AG04449 (cell line): ENCODE measurements at regions of chr2 and their contacts with region 1.

Region 1: DNA sequence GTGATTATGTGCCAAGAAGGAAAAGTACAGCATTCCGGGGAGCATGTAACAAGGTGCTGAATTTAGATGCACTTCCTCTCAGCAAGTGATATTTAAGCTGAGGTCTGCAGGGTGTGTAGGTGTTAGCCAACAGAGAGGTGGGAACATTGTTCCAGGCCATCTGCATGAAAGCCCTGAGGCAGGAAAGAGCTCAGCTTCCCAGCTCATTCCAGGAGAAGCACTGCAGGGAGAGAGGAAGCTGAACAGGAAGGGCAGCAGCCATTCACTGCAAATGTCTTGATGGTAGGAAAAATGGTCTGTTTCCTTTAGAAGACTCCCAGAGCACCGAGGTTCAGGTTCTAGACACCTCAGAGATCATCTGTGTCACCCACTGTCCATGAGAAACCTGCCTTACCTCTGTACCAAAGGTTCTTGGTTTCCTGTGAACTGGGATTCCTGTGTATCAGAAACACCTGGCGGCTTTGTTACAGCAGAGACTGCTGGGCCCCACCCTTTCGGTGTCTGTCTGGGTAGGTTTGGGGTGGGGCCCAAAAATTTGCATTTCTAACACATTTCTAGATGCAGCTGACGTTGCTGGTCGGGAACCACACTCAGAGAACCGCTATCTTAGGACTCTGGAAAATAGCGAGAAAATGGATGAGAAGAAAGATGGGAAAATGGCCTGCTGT is 84.0 kb downstream of the RTN4 start:
- DNase-seq: no peak
- H3K4me3 ChIP-seq: no peak overlapping the region
- CTCF ChIP-seq: no peak

Region 2: DNA sequence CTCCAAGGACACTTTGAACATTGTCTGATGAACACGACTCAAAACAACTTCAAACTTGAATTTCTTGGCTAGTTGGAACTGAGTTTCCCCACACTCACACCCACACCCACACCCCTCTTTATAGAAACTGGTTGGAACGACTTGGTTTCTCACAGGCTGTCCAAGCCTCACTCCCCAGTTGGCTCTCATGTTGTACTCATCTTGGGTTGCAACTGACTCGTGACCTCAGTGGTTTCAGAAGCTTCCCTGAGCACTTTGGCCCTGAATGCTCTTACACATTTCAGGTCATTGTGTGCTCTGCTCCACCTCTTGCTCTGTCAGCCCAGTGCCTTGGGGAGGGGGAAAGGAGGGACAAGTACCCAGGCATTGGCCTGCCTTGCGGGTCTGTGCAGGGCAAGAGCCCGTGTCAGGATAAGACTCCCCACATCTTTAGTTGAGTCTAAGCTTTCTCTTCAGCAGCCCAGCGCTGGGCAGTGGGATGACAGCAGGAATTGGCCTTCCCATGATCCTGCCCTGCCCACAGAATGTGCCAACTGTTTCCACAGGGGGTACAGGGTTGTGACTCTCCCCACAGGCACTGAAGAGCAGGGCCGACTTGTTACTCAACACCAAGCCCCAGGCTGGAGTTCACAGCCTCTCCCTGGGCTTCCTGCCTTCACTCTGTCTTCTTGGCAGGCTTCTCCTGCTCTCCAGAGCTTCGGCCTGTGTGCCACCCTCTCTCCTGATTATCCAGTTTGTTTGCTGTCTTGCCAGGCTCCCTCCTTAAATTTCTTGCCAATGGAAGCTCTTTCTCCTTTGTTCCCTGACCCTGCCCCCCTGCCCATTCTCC is 20.7 kb before region 1 on chr2:
- CTCF ChIA-PET with region 1: no interaction called
- POLR2A ChIA-PET with region 1: no interaction called
- DNase-seq: peak; percentile 23
- H3K4me3 ChIP-seq: no peak overlapping the region
- CTCF ChIP-seq: no peak

Region 3: GRCh38 chr2:54956111-54956627 is 10.1 kb before region 1 on chr2:
- CTCF ChIA-PET with region 1: interaction called, 10 read pairs
- POLR2A ChIA-PET with region 1: no interaction called
- DNase-seq: no peak
- H3K4me3 ChIP-seq: no peak overlapping the region
- CTCF ChIP-seq: no peak

Region 4: GRCh38 chr2:55033066-55033742 is 66.9 kb after region 1 on chr2:
- CTCF ChIA-PET with region 1: no interaction called
- POLR2A ChIA-PET with region 1: no interaction called
- DNase-seq: no peak
- H3K4me3 ChIP-seq: no peak overlapping the region
- CTCF ChIP-seq: no peak